ENCODE measurements at regions of chr1 and their contacts with region 1.

Region 1: DNA sequence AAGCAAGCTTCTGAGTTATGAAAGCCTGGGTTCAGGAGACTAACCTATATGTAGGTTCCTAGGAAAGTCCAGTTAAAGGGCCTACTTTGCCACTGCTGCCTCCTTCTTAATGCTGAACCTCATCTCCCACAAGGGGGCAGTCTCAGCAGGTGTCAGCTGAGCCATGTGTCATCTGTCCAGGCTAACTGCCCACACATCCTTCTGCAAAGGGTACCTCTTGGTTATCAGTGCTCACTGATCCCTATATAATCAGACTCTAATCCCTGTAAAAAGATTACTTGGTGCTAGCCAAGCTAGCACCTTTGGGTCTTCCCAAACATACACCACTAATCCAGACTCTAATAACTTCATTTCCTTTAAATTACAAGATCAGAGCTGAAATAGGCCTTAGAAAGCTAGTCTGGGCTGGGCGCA is 9.0 kb downstream of the PRDX1 start:
- DNase-seq: peak; percentile 48
- H3K4me3 ChIP-seq: no peak overlapping the region
- H3K27ac ChIP-seq: no peak overlapping the region
- H3K4me1 ChIP-seq: no peaks in the 10 kb centered on the region
- H3K27me3 ChIP-seq: no peaks in the 10 kb centered on the region
- CTCF ChIP-seq: peak; percentile 68 to 84

Region 2: GRCh38 chr1:45230540-45230939 is 282.1 kb before region 1 on chr1:
- CTCF ChIA-PET with region 1: no interaction called
- dilution Hi-C with region 1: no loop called
- in situ Hi-C with region 1: no loop called
- intact Hi-C with region 1: no loop called
- DNase-seq: no peak
- H3K4me3 ChIP-seq: no peak overlapping the region
- H3K27ac ChIP-seq: no peak overlapping the region
- H3K4me1 ChIP-seq: no peaks in the 10 kb centered on the region
- H3K27me3 ChIP-seq: no peaks in the 10 kb centered on the region
- CTCF ChIP-seq: peak in 1 of 2 donors; percentile 66

Region 3: DNA sequence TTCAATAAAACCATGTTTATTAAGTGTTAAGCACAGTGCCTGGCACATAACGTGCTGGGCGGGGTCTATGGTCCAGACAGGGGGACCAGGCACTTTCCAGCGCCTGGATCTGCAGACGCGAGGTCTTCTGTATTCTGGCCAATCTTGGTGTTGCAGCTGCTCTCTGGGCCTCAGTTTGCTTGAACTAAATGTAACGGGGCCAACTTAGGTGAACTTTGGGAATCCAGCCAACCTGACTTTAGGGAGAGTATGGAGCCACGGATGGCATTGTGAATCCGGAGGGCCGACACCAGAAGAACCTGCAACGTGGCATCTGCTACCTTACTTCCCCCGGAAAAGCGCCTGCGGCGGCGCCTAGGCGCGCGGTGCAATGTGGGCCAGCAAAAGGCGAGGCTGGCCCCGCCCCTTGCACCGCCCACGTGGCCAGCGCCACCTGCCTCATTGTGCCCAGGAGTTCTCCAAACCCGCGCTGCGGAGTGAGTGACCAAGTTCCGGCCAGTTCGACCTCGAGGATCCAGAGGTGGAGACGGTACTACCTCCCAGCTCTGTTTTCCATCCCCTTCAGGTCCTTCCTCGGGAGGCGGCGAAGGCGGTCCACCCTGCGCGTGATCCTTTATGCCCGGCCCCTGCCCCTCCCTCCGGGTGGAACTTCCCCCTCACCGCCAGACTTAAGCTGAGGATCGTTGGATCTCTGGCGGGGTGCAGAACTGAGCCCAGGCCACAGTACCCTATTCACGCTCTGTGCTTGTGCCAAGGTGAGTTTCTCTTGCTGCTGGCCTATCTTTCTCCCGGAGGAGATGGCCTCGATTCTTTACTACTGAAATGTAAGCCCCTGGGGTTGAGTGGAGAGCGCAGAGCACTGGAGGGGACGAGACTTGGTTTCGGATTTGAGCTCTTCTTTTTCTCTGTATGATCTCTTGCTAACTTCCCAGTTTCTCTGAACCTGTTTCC is 38.0 kb after region 1 on chr1 and contains the start of gene AKR1A1:
- CTCF ChIA-PET with region 1: interaction called, 4 read pairs
- dilution Hi-C with region 1: no loop called
- in situ Hi-C with region 1: loop called in 1 of 2 experiments (anchors 5 kb)
- intact Hi-C with region 1: no loop called
- DNase-seq: peak; percentile 91
- H3K4me3 ChIP-seq: peak within 1 kb of the TSS; percentile 51 to 79 (median 60)
- H3K27ac ChIP-seq: peak within 1 kb of the TSS; percentile 58
- H3K4me1 ChIP-seq: peaks cover 12% of the 10 kb centered on the region
- H3K27me3 ChIP-seq: no peaks in the 10 kb centered on the region
- CTCF ChIP-seq: no peak
- total RNA-seq, gene AKR1A1: 58.7 to 79.7 TPM

Region 4: DNA sequence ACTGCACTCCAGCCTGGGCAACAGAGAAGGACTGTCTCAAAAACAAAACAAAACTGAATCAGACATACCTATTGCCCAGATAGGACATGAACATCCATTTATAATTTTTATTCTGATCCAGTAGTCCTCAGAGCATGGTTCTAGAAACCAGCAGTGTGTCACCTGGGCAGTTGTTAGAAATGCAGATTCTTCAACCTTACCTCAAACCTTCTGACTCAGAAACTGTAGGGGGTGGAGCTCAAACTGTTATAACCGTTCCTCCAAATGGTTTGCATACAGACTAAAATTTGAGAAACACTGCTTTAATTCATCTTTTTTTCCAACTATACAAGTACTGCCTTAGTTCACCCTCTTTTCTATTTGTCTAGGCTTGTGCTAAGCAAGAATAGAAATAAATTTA is 77.2 kb after region 1 on chr1:
- CTCF ChIA-PET with region 1: no interaction called
- dilution Hi-C with region 1: loop called (anchors 5 kb)
- in situ Hi-C with region 1: no loop called
- intact Hi-C with region 1: no loop called
- DNase-seq: no peak
- H3K4me3 ChIP-seq: no peak overlapping the region
- H3K27ac ChIP-seq: no peak overlapping the region
- H3K4me1 ChIP-seq: peaks cover 14% of the 10 kb centered on the region
- H3K27me3 ChIP-seq: no peaks in the 10 kb centered on the region
- CTCF ChIP-seq: no peak

Measured in mammary epithelial cell (primary cell).